Caco-2 (cell line): ENCODE measurements at regions of chr14 and their contacts with region 1.

Region 1: DNA sequence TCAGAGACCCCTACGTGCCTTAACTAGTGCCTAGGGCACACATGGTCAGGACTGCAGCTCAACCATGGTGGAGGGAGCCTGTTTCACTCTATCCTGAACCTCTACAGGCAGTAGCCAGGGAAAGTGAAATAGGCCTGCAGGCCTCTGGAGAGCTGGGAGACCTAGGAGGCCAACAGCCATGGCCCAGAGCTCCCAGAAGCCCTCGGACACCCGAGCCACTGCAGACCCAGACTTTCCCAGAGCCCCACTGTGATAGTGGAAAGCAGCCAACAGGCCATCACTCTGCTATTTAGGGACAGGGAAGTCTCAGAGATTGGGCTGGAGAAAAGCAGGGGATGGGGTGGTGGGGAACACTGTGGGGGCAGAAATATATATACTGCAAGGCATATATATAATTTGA is 56.5 kb upstream of the ZFP36L1 start:
- DNase-seq: no peak
- H3K4me3 ChIP-seq: no peak overlapping the region
- H3K4me3 Mint-ChIP-seq: no peak overlapping the region
- H3K27ac Mint-ChIP-seq: no peak overlapping the region
- H3K4me1 ChIP-seq: no peaks in the 10 kb centered on the region
- H3K4me1 Mint-ChIP-seq: peaks cover 4% of the 10 kb centered on the region
- H3K27me3 ChIP-seq: no peaks in the 10 kb centered on the region
- H3K27me3 Mint-ChIP-seq: no peaks in the 10 kb centered on the region
- CTCF ChIP-seq: no peak

Region 2: GRCh38 chr14:68884031-68885030 is 34.9 kb after region 1 on chr14:
- CTCF ChIA-PET with region 1: no interaction called
- POLR2A ChIA-PET with region 1: no interaction called
- intact Hi-C with region 1: no loop called
- DNase-seq: no peak
- H3K4me3 ChIP-seq: no peak overlapping the region
- H3K4me3 Mint-ChIP-seq: no peak overlapping the region
- H3K27ac Mint-ChIP-seq: no peak overlapping the region
- H3K4me1 ChIP-seq: no peaks in the 10 kb centered on the region
- H3K4me1 Mint-ChIP-seq: peaks cover 7% of the 10 kb centered on the region
- H3K27me3 ChIP-seq: no peaks in the 10 kb centered on the region
- H3K27me3 Mint-ChIP-seq: no peaks in the 10 kb centered on the region
- CTCF ChIP-seq: no peak

Region 3: GRCh38 chr14:68939893-68940613 is 90.6 kb after region 1 on chr14:
- CTCF ChIA-PET with region 1: interaction called, 3 read pairs
- POLR2A ChIA-PET with region 1: interaction called, 12 read pairs
- intact Hi-C with region 1: no loop called
- DNase-seq: peak; percentile 43 to 45
- H3K4me3 ChIP-seq: no peak overlapping the region
- H3K4me3 Mint-ChIP-seq: no peak overlapping the region
- H3K27ac Mint-ChIP-seq: peak overlapping the region; percentile 85
- H3K4me1 ChIP-seq: peaks cover 52% of the 10 kb centered on the region
- H3K4me1 Mint-ChIP-seq: peaks cover 45% of the 10 kb centered on the region
- H3K27me3 ChIP-seq: no peaks in the 10 kb centered on the region
- H3K27me3 Mint-ChIP-seq: no peaks in the 10 kb centered on the region
- CTCF ChIP-seq: no peak